ENCODE measurements at regions of chr3 and their contacts with region 1.

Region 1: DNA sequence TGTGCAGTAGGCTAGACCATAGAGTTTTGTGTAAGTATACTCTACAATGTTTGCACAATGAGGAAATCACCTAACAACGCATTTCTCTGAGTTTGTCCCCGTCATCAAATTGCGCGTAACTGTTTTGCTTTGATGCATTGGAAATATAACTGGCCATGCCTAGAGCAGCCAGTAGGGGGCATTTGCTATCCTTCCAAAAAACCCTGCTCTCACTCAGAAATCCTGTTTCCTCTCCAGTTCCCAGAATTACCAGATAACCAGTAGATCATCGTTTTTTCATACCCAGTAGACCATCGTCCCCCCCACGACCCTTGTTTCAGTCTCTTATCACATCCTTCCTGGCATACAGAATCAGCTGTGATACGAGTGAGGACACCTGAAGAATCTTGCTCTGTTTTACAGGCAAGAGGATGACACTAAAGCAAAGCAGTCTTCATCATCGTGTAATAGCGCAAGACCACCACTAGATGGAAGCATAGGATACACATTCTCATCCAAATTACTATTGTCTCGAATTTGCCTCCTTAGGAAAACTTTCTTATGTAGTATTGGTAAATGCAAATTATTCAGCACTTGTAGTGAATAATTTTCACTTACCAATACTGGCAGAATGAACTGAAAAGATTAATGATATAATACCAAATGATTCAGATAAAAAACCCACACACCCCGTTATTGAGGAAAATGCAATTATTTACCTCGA is 4.4 kb upstream of the GABRR3 start:
- DNase-seq: peak; percentile 44
- H3K4me3 ChIP-seq: peak overlapping the region in 2 of 4 donors; percentile 14 to 27
- H3K27ac ChIP-seq: peak overlapping the region in 1 of 4 donors; percentile 27
- H3K4me1 ChIP-seq: no peaks in the 10 kb centered on the region
- H3K27me3 ChIP-seq: peaks cover 21% of the 10 kb centered on the region
- CTCF ChIP-seq: peak; percentile 78 to 91 (median 89)
- EP300 ChIP-seq: no peak
- POLR2A ChIP-seq: no peak

Region 2: DNA sequence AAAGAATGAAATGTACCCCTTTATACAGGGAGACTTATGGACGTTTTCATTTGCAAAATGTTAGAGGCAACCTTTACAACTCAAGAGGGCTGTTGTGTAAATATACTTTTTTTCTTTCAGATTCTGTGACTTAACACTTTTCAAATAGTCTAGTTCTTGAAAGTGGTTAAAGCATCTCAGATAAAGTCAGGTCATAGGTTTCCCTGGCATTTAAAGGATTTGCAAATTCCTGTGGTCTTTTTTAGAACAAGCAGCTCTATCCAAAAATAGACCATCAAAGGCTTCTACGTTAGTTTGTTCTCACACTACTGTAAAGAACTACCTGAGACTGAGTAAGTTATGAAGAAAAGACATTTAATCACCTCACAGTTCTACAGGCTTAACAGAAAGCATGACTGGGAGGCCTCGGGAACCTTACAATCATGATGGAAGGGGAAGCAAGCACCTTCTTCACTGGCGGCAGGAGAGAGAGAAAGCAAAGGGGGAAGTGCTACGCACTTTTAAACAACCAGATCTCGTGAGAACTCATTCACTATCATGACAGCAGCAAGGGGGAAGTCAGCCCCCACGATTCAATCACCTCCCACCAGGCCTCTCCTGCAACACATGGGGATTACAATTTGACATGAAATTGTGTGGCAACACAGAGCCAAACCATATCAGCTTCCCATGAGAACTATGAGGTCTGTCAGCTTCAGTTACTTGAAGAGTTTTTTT is 18.9 kb after region 1 on chr3:
- in situ Hi-C with region 1: no loop called
- intact Hi-C with region 1: no loop called
- DNase-seq: no peak
- H3K4me3 ChIP-seq: no peak overlapping the region
- H3K27ac ChIP-seq: no peak overlapping the region
- H3K4me1 ChIP-seq: no peaks in the 10 kb centered on the region
- H3K27me3 ChIP-seq: no peaks in the 10 kb centered on the region
- CTCF ChIP-seq: no peak
- EP300 ChIP-seq: no peak
- POLR2A ChIP-seq: no peak

Region 3: DNA sequence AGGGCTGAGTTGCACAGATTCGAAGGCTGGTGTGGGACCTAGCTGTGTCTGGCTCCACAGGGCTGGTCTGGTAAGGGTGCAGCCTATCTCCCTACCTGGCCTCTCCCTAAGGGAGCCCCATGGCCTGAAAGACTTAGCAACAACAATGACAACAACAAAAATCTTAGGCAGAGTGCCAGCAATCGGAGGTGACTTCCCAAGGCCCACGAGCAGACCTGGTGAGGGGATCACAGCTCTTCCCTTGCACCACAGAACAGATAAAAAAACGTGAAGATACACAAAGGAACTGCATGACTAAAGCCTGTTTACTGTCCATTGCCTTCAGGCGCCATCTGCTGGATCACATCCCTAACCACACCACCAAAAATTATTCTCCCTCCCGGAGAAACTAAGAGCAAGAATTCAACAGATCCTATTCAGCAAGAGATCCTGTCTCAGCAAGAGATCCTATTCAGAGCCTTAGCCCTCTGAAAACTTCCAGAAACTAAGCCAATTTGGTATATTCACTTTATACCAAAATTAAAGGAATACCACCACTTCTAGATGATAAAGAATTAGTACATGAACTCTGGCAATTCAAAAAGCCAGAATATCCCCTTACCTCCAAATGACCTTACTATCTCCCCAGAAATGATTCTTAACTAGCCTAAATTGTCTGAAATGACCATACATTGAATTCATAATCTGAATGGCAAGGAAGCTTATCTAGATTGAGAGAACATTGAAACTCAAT is 290.1 kb after region 1 on chr3:
- in situ Hi-C with region 1: loop called (anchors 5 to 25 kb)
- intact Hi-C with region 1: loop called (anchors 10 kb)
- DNase-seq: peak; percentile 15
- H3K4me3 ChIP-seq: no peak overlapping the region
- H3K27ac ChIP-seq: no peak overlapping the region
- H3K4me1 ChIP-seq: no peaks in the 10 kb centered on the region
- H3K27me3 ChIP-seq: no peaks in the 10 kb centered on the region
- CTCF ChIP-seq: peak; percentile 45 to 61 (median 50)
- EP300 ChIP-seq: no peak
- POLR2A ChIP-seq: no peak